Activated CD4-positive, alpha-beta memory T cell treated with anti-CD3 and anti-CD28 coated beads for 36 hours (primary cell): ENCODE measurements at regions of chr15 and their contacts with region 1.

Region 1: DNA sequence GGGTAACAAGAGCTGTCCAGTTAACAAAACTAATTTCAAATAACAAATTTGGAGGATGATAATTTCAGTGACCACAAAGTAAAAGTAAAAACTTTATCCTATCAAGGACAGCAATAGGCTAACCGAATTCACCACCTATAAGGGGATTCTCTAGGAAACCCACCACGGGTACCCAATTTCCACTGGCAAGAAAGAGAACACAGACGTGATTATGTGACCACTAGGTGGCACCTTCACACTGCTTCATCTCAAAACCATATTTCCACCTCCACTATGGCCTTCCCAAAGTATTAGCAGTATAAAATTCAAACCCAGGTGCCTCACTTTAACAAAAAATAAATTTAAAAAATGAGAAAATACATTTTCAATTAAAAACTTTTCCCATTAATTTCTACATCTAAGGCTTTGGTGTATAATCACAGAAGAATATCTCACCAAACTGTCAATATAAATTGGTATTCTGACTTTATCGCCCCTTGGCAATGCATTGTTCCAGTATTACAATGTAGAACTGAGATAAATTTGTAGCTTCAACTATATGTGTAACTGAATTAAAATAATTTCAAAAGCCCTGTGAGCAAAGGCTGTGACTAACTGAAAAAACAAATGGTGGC is 96.5 kb downstream of the FSIP1 start:
- DNase-seq: peak; percentile 28
- H3K4me3 Mint-ChIP-seq: no peak overlapping the region
- H3K27ac Mint-ChIP-seq: no peak overlapping the region
- H3K4me1 Mint-ChIP-seq: no peaks in the 10 kb centered on the region
- H3K27me3 Mint-ChIP-seq: peaks cover 2% of the 10 kb centered on the region

Region 2: DNA sequence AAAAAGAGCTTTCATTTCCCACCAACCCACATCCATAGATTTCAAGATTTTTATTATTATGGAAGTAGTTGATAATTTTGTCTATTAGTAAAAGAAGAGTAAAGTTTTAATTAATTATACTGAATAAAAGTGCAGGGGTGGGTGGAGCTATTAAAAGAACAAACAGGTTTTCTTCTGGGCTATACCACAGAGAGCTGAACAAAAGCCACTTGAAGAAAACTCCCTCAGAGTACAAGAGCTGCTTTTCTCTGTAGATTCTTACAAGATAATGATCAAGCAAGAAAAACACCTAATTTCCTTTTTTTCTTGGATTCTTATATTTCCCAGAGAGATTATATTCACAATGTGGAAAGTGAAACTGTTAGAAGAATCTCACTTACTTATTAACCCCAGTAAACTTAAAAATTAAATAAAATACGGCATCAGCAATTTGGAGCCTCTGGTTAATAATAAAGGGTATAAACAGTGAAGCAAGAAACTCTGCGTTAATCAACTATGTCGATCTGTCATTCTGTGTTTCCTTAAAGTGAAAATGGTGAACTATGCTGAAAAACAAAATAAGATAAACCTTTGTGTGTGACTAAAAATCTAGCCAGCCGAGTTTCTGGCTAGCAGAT is 20.4 kb before region 1 on chr15:
- CTCF ChIA-PET with region 1: interaction called, 11 read pairs
- POLR2A ChIA-PET with region 1: no interaction called
- intact Hi-C with region 1: no loop called
- DNase-seq: no peak
- H3K4me3 Mint-ChIP-seq: no peak overlapping the region
- H3K27ac Mint-ChIP-seq: no peak overlapping the region
- H3K4me1 Mint-ChIP-seq: peaks cover 5% of the 10 kb centered on the region
- H3K27me3 Mint-ChIP-seq: no peaks in the 10 kb centered on the region

Region 3: GRCh38 chr15:39736412-39737197 is 50.5 kb after region 1 on chr15:
- CTCF ChIA-PET with region 1: interaction called, 17 read pairs
- POLR2A ChIA-PET with region 1: no interaction called
- intact Hi-C with region 1: no loop called
- DNase-seq: no peak
- H3K4me3 Mint-ChIP-seq: no peak overlapping the region
- H3K27ac Mint-ChIP-seq: no peak overlapping the region
- H3K4me1 Mint-ChIP-seq: no peaks in the 10 kb centered on the region
- H3K27me3 Mint-ChIP-seq: no peaks in the 10 kb centered on the region

Region 4: GRCh38 chr15:39874890-39875549 is 188.9 kb after region 1 on chr15:
- CTCF ChIA-PET with region 1: interaction called, 5 read pairs
- POLR2A ChIA-PET with region 1: no interaction called
- intact Hi-C with region 1: loop called (anchors 1 kb)
- DNase-seq: peak; percentile 35
- H3K4me3 Mint-ChIP-seq: no peak overlapping the region
- H3K27ac Mint-ChIP-seq: no peak overlapping the region
- H3K4me1 Mint-ChIP-seq: peaks cover 10% of the 10 kb centered on the region
- H3K27me3 Mint-ChIP-seq: peaks cover under 1% of the 10 kb centered on the region

Region 5: DNA sequence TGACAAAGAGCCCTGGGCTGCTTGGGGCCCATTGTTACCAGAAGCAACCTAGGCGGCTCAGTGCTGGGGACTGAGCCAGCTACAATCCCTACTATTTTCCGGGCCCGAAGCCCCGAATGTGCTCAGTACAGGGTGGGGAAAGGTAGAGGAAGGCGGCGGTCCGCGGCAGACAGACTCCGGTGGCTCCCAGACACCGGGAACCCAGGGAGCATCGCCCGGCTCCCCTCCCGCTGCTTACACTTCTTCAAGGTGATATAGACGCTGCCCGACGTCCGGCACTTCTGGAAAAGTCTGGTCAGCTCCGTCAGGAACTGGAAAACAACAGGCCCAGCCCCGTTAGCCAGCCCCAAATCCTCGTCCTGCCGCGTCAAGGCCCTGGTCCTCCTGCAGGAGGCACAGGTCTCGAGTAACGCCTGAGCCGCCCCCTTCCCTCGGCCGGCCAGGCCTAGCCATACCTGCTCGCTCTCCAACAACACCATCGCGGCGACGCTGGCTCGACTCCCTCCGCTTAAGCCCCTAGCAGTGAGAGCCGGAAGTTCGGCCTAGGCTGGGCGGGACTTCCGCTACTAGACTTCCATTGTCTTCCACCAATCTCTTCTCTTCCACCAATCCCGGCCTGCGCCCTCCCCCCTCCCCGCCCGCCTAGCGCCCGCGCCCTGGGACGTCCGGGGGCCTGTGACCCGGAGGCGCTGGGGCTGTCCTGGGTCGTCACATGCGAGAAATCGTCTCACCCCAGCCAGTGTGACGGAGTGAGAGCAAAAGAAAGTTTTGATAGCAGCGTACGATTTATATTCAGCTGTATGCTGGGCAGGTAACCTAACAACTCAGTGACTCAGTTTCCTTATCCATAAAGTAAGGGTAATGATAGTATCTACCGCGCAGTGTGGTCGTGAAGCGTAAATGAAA is 352.8 kb after region 1 on chr15 and contains the start of gene SRP14:
- CTCF ChIA-PET with region 1: interaction called, 4 read pairs
- POLR2A ChIA-PET with region 1: no interaction called
- intact Hi-C with region 1: loop called (anchors 10 kb)
- DNase-seq: peak; percentile 97
- H3K4me3 Mint-ChIP-seq: peak within 1 kb of the TSS; percentile 98
- H3K27ac Mint-ChIP-seq: peak within 1 kb of the TSS; percentile 91
- H3K4me1 Mint-ChIP-seq: peaks cover 27% of the 10 kb centered on the region
- H3K27me3 Mint-ChIP-seq: no peaks in the 10 kb centered on the region
- total RNA-seq, gene SRP14: 168 to 170 TPM